B cell (primary cell): ENCODE measurements at regions of chr5 and their contacts with region 1.

Region 1: DNA sequence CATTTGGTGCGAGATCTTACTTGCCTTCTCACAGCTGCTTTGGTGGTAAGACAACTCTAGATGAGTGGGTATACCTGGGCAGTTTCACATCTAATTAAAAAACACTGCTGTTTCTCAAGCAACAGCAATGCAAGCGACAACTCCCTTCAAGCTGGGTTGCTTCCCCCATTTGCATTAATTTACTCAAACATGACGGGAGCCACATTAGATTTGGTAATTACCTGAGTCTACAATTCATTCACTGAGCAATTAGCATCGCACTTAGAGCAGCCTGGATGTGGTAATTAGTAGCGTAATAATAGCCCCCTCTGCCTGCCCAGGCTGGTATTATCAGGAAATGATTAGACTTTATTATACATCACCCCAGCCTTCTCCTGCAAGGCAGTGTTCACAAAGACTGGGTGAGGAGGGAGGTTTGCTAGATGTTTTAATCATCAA is 73.4 kb downstream of the FBXO38 start:
- DNase-seq: peak; percentile 48
- ATAC-seq: peak; percentile 41
- H3K4me3 ChIP-seq: no peak overlapping the region
- H3K4me3 Mint-ChIP-seq: no peak overlapping the region
- H3K27ac ChIP-seq: no peak overlapping the region
- H3K27ac Mint-ChIP-seq: no peak overlapping the region
- H3K4me1 ChIP-seq: no peaks in the 10 kb centered on the region
- H3K4me1 Mint-ChIP-seq: no peaks in the 10 kb centered on the region
- H3K27me3 ChIP-seq: peaks cover 0 to 16% (median 2%) of the 10 kb centered on the region in 4 experiments
- H3K27me3 Mint-ChIP-seq: peaks cover 27% of the 10 kb centered on the region
- CTCF ChIP-seq: peak; percentile 68

Region 2: GRCh38 chr5:148290271-148291195 is 166.7 kb before region 1 on chr5:
- CTCF ChIA-PET with region 1: no interaction called
- POLR2A ChIA-PET with region 1: no interaction called
- intact Hi-C with region 1: loop called (anchors 2 kb)
- DNase-seq: peak; percentile 8
- ATAC-seq: no peak
- H3K4me3 ChIP-seq: no peak overlapping the region
- H3K4me3 Mint-ChIP-seq: no peak overlapping the region
- H3K27ac ChIP-seq: no peak overlapping the region
- H3K27ac Mint-ChIP-seq: no peak overlapping the region
- H3K4me1 ChIP-seq: no peaks in the 10 kb centered on the region
- H3K4me1 Mint-ChIP-seq: no peaks in the 10 kb centered on the region
- H3K27me3 ChIP-seq: no peaks in the 10 kb centered on the region
- H3K27me3 Mint-ChIP-seq: peaks cover 1% of the 10 kb centered on the region
- CTCF ChIP-seq: peak; percentile 26

Region 3: DNA sequence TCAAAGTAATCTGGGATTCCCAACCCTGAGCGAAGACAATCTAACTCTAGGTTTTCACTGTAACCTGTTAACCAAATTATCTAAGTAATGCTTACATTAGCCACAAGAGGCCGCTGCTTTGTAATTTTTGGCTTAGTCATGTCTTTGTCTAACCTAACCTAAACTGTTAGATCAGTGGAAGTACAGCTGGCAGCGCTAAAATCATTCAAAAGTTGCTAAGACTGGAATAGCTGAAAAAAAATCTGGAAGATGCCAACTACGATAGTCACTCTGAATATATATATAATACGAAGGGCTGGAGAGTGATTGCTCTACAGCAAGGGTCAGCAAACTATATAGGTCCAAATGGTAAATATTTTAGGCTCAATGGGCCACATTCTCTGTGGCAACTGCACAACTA is 13.2 kb before region 1 on chr5:
- CTCF ChIA-PET with region 1: interaction called, 12 read pairs
- POLR2A ChIA-PET with region 1: no interaction called
- intact Hi-C with region 1: no loop called
- DNase-seq: peak; percentile 57
- ATAC-seq: peak; percentile 54
- H3K4me3 ChIP-seq: no peak overlapping the region
- H3K4me3 Mint-ChIP-seq: no peak overlapping the region
- H3K27ac ChIP-seq: no peak overlapping the region
- H3K27ac Mint-ChIP-seq: no peak overlapping the region
- H3K4me1 ChIP-seq: no peaks in the 10 kb centered on the region
- H3K4me1 Mint-ChIP-seq: no peaks in the 10 kb centered on the region
- H3K27me3 ChIP-seq: no peaks in the 10 kb centered on the region
- H3K27me3 Mint-ChIP-seq: no peaks in the 10 kb centered on the region
- CTCF ChIP-seq: peak; percentile 88

Region 4: DNA sequence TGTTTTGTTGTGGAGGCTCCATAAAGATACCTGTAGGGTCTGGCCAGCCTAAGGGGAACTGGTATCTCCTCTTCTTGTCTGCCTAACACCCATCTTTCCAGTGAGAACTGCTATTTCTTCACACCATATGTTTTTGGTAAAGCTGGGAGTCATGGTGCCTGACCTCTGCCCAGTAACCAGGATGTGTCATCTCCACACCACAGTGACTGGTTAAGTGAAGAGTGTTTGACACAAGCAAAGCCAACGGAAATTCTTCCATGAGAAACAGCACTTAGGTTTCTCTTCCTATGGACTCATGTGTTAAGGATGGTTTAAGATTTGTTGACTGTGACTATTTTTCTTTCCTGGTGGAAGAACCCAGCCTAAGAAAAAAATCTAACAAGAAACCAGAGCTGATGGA is 85.6 kb after region 1 on chr5:
- CTCF ChIA-PET with region 1: no interaction called
- POLR2A ChIA-PET with region 1: no interaction called
- intact Hi-C with region 1: no loop called
- DNase-seq: no peak
- ATAC-seq: no peak
- H3K4me3 ChIP-seq: no peak overlapping the region
- H3K4me3 Mint-ChIP-seq: no peak overlapping the region
- H3K27ac ChIP-seq: no peak overlapping the region
- H3K27ac Mint-ChIP-seq: no peak overlapping the region
- H3K4me1 ChIP-seq: no peaks in the 10 kb centered on the region
- H3K4me1 Mint-ChIP-seq: no peaks in the 10 kb centered on the region
- H3K27me3 ChIP-seq: no peaks in the 10 kb centered on the region
- H3K27me3 Mint-ChIP-seq: no peaks in the 10 kb centered on the region
- CTCF ChIP-seq: no peak